Kidney (tissue), 22 donors: ENCODE measurements at regions of chr16 and their contacts with region 1.

Region 1: DNA sequence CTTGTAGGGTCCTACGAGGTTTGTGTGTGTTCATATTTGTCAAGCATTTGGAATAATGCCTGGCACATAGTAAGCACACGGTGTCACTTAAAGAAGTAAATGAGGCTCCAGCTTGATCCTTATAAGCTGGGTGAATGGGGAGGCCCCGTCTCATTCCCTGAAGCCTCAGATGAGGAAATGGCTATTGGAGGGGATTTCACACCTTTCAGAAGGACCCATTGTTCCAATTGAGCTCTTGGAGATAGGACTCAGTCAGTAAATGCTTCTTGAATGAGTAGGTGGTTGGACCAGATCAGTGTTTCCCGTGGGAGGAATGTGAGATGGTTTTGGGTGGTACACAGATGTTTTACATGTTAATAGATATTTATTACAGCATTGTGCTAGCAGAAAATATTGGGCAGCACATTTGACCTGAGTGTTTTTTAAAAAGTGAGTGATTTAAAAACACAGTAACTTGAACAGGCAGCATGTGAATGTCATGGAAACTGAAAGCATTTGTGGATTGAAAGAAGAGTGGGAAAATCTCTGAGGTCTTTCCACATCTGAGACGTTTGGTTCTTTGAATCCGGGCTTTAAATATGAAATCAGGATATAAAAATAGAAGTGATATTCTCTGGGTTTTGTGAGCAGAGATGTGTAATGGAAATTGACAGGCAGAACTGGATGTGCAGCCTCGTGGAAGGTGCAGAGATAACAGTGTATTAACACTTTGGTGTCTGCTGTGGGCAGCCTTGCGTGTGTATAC is 36.4 kb upstream of the ARHGAP17 start:
- DNase-seq: no peak
- H3K4me3 ChIP-seq: no peak overlapping the region
- H3K27ac ChIP-seq: peak overlapping the region in 1 of 2 donors; percentile 7
- H3K4me1 ChIP-seq: peaks cover 0 to 8% (median 0%) of the 10 kb centered on the region in 3 donors
- H3K27me3 ChIP-seq: no peaks in the 10 kb centered on the region
- CTCF ChIP-seq: no peak

Region 2: GRCh38 chr16:25111403-25112166 is 60.0 kb after region 1 on chr16 and contains the start of gene LCMT1:
- intact Hi-C with region 1: no loop called
- DNase-seq: peak; percentile 96 to 100 (median 97)
- H3K4me3 ChIP-seq: peak within 1 kb of the TSS; percentile 88 to 94 (median 90)
- H3K27ac ChIP-seq: peak within 1 kb of the TSS; percentile 44 to 86
- H3K4me1 ChIP-seq: peaks cover 3 to 18% (median 12%) of the 10 kb centered on the region in 3 donors
- H3K27me3 ChIP-seq: no peaks in the 10 kb centered on the region
- CTCF ChIP-seq: no peak
- total RNA-seq, gene LCMT1: 44.8 TPM

Region 3: GRCh38 chr16:25224731-25225319 is 173.2 kb after region 1 on chr16:
- intact Hi-C with region 1: loop called (anchors 10 kb)
- DNase-seq: no peak
- H3K4me3 ChIP-seq: no peak overlapping the region
- H3K27ac ChIP-seq: no peak overlapping the region
- H3K4me1 ChIP-seq: no peaks in the 10 kb centered on the region
- H3K27me3 ChIP-seq: no peaks in the 10 kb centered on the region
- CTCF ChIP-seq: no peak